ENCODE measurements at regions of chr14 and their contacts with region 1.

Region 1: DNA sequence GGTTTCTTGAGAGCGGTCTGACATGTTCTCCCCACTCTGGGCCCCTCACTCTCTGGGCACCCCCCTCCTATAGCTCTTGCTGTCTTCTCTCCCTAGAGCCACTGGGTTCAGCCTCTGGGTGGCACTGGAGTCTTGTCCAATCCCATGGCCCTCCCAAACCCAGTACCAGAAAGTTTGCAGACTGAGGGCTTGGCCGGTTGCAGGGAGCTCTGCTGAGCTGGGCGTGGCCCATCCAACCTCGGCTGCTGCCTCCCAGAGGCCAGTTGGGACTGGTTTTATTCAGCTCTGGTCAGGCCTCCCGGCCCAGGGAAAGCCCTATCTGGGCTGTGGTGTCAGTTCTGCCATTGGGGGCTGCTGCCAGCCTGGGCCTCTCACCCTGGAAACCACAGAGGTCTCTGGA is 37.9 kb downstream of the ISCA2 start:
- DNase-seq: peak; percentile 79
- H3K4me3 Mint-ChIP-seq: no peak overlapping the region
- H3K27ac Mint-ChIP-seq: peak overlapping the region; percentile 65
- H3K4me1 Mint-ChIP-seq: peaks cover 12% of the 10 kb centered on the region
- H3K27me3 Mint-ChIP-seq: no peaks in the 10 kb centered on the region
- CTCF ChIP-seq: peak; percentile 18

Region 2: DNA sequence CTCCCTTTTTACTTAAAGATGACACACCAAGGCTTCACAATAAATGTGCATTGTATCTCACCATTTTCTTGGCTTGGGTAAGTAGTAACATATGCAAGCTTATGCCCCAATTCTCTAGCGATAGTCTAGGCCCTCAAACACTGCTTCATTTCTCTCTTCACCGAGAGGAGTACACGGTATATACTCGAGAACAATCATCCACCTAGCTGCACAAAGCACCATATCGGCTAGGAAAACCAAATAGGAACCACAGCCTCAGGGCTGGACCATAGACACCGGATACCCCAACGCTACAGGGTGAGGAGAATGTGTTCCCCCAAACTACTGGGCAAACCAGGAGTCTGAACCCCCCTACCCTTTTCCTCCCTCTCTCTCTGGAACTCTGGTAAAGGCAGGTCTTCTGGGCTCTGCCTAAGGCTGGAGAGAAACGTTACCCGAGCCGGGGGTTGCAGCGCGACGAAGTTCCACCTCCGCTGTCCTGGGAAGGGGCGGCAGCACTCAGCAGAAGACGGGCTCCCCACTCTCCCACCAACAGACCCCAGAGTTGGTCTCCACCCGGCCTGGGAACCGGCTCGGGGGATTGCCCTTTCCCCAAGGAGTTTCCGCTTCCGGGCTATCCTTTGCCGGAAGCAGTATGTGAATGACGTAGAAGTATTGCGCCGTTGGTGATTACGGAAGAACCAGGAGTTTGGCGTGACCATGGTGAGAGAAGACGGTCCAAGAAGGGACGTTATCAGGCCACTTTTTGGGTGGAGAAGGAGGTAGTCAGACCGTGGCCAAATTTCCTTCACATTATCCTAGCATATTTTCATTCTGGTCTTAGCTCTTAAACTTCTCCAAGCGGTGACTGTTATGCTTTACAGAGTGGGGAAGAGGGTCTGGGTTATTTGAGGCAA is 181.3 kb after region 1 on chr14 and contains the starts of genes AREL1 and FCF1:
- CTCF ChIA-PET with region 1: no interaction called
- POLR2A ChIA-PET with region 1: no interaction called
- intact Hi-C with region 1: loop called (anchors 1 kb)
- DNase-seq: peak; percentile 89
- H3K4me3 Mint-ChIP-seq: peak within 1 kb of the TSS; percentile 99
- H3K27ac Mint-ChIP-seq: peak within 1 kb of the TSS; percentile 99
- H3K4me1 Mint-ChIP-seq: peaks cover 13% of the 10 kb centered on the region
- H3K27me3 Mint-ChIP-seq: no peaks in the 10 kb centered on the region
- CTCF ChIP-seq: no peak
- total RNA-seq, gene AREL1: 27.7 and 29.8 TPM in 2 replicates
- total RNA-seq, gene FCF1: 61.5 and 62.3 TPM in 2 replicates

Measured in MCF 10A (cell line).